Stomach (tissue), 19 donors: ENCODE measurements at regions of chr15 and their contacts with region 1.

Region 1: GRCh38 chr15:91268510-91268909 is 168.5 kb downstream of the SV2B start:
- DNase-seq: no peak
- H3K4me3 ChIP-seq: no peak overlapping the region
- H3K27ac ChIP-seq: no peak overlapping the region
- H3K4me1 ChIP-seq: peaks cover 0 to 17% (median 2%) of the 10 kb centered on the region in 4 donors
- H3K27me3 ChIP-seq: peaks cover 0 to 12% (median 12%) of the 10 kb centered on the region in 3 donors
- CTCF ChIP-seq: no peak
- EP300 ChIP-seq: no peak
- POLR2A ChIP-seq: no peak

Region 2: GRCh38 chr15:91055548-91056331 is 212.8 kb before region 1 on chr15:
- intact Hi-C with region 1: loop called (anchors 5 kb)
- DNase-seq: peak; percentile 54 to 84
- H3K4me3 ChIP-seq: no peak overlapping the region
- H3K27ac ChIP-seq: no peak overlapping the region
- H3K4me1 ChIP-seq: peaks cover 0 to 3% (median 0%) of the 10 kb centered on the region in 4 donors
- H3K27me3 ChIP-seq: peaks cover 4 to 78% (median 10%) of the 10 kb centered on the region in 3 donors
- CTCF ChIP-seq: peak in 5 of 7 experiments; percentile 51 to 72 (median 59)
- EP300 ChIP-seq: no peak
- POLR2A ChIP-seq: no peak

Region 3: GRCh38 chr15:91214675-91215590 is 53.6 kb before region 1 on chr15:
- intact Hi-C with region 1: no loop called
- DNase-seq: no peak
- H3K4me3 ChIP-seq: no peak overlapping the region
- H3K27ac ChIP-seq: no peak overlapping the region
- H3K4me1 ChIP-seq: no peaks in the 10 kb centered on the region
- H3K27me3 ChIP-seq: peaks cover 0 to 19% (median 0%) of the 10 kb centered on the region in 3 donors
- CTCF ChIP-seq: no peak
- EP300 ChIP-seq: no peak
- POLR2A ChIP-seq: no peak

Region 4: DNA sequence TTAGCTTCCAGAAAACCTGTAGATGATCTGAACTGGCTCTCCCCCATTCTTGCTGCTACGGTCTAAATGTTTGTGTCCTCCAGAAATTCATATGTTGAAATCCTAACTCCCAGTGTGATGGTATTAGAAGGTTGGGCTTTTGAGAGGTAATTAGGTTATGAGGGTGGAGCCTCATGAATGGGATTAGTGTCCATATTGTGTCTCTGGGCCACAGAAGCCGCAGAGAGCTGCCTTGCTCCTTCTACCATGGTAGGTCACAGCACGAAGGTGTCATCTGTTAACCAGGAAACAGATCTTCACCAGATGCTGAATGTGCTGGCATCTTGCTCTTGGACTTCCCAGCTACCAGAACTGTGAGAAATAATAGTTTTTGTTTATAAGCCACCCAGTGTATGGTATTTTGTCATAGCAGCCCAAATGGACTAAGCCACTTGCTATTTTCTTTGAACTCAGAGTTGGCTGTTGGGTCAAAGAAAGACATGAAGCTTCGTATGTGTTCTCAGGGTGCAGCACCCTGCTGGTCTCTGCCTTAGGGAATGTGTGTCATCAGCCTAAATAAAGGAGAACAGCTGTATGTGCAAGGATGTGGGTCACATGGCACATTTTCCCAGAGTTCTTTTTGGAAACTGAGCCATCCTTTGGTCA is 267.5 kb after region 1 on chr15:
- intact Hi-C with region 1: no loop called
- DNase-seq: no peak
- H3K4me3 ChIP-seq: no peak overlapping the region
- H3K27ac ChIP-seq: peak overlapping the region in 2 of 5 donors; percentile 12 to 30
- H3K4me1 ChIP-seq: peaks cover 19 to 30% (median 28%) of the 10 kb centered on the region in 4 donors
- H3K27me3 ChIP-seq: no peaks in the 10 kb centered on the region
- CTCF ChIP-seq: no peak
- EP300 ChIP-seq: no peak
- POLR2A ChIP-seq: no peak

Region 5: DNA sequence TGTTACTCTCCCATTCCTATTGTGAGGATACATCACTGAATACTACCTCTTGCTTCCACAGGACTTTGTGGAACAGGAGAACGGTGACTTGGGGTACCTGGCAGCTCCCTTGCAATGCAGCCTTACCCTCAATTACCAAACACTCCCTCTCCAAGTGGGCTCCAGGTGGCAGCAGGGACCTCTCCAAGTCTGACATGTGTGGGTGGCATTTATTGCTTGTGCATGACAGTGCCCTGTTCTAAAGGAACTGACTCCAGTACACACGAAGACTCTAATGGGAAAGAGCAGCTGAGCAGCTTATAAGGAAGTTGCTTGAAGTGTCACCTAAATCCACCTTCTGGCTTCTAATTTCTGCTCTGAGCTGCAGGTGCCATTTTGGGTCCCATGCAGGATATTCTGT is 410.9 kb after region 1 on chr15:
- intact Hi-C with region 1: no loop called
- DNase-seq: no peak
- H3K4me3 ChIP-seq: no peak overlapping the region
- H3K27ac ChIP-seq: no peak overlapping the region
- H3K4me1 ChIP-seq: no peaks in the 10 kb centered on the region
- H3K27me3 ChIP-seq: peaks cover 0 to 11% (median 0%) of the 10 kb centered on the region in 3 donors
- CTCF ChIP-seq: peak in 1 of 7 experiments; percentile 15
- EP300 ChIP-seq: no peak
- POLR2A ChIP-seq: no peak